ENCODE measurements at regions of chr11 and their contacts with region 1.

Region 1: GRCh38 chr11:46238967-46239800 is 38.3 kb upstream of the CREB3L1 start:
- DNase-seq: peak; percentile 88 to 95 (median 89)
- ATAC-seq: peak; percentile 77 to 87 (median 84)
- H3K4me3 ChIP-seq: peak overlapping the region in 11 of 12 donors; percentile 32 to 67 (median 59)
- H3K27ac ChIP-seq: peak overlapping the region; percentile 84 to 96 (median 92)
- H3K4me1 ChIP-seq: peaks cover 3 to 50% (median 26%) of the 10 kb centered on the region in 12 donors
- H3K27me3 ChIP-seq: no peaks in the 10 kb centered on the region
- CTCF ChIP-seq: peak; percentile 98 to 100 (median 99)
- POLR2A ChIP-seq: peak in 1 of 2 donors; percentile 40

Region 2: GRCh38 chr11:46121724-46122477 is 117.3 kb before region 1 on chr11:
- intact Hi-C with region 1: loop called in 6 of 10 experiments (anchors 2 to 10 kb)
- DNase-seq: peak; percentile 80 to 87 (median 83)
- ATAC-seq: peak in 3 of 4 donors; percentile 4 to 51 (median 42)
- H3K4me3 ChIP-seq: peak overlapping the region; percentile 50 to 92 (median 74)
- H3K27ac ChIP-seq: peak overlapping the region; percentile 43 to 98 (median 92)
- H3K4me1 ChIP-seq: peaks cover 0 to 35% (median 24%) of the 10 kb centered on the region in 12 donors
- H3K27me3 ChIP-seq: no peaks in the 10 kb centered on the region
- CTCF ChIP-seq: no peak
- POLR2A ChIP-seq: no peak

Region 3: DNA sequence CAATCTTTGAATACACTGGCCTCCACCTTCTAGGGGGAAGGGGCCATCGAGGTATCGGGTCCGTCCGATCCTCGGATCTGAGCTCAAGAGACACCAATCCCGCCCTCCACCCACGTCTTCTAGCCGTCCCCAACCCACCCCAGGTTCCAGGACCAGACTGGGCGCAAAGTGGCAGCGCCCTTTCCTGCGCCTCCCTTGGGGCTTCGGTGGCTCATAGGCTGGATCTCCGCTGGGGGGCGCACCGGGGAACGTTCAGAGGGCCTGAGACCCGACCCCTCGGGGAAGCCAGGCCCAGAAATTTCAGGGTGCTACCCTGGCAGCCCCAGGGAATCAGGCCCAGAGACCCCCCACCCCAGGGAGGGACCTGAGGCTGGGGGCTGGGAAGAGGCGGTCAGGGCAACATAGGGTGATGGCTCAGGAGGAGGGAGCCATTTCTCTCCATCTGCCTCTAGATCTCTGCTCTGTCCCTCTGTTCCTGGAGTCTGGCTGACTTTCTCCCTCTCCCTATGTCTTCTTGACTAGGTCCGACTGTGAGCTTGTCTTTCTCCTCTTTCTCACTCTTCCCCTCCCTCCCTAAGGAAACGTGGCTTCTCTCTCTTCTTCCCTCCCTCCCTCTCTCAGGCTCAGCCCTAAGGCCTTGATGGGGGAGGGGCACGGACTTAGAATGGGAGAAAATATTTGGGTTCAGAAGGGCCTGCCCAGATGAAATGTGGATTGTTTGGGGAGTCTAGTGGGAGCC is 39.4 kb after region 1 on chr11:
- intact Hi-C with region 1: loop called in 6 of 10 experiments (anchors 2 to 5 kb)
- DNase-seq: peak in 4 of 5 donors; percentile 56 to 73 (median 61)
- ATAC-seq: peak in 3 of 4 donors; percentile 27 to 50 (median 43)
- H3K4me3 ChIP-seq: peak overlapping the region; percentile 48 to 87 (median 72)
- H3K27ac ChIP-seq: peak overlapping the region; percentile 60 to 89 (median 80)
- H3K4me1 ChIP-seq: peaks cover 7 to 84% (median 58%) of the 10 kb centered on the region in 12 donors
- H3K27me3 ChIP-seq: peaks cover 0 to 24% (median 0%) of the 10 kb centered on the region in 9 donors
- CTCF ChIP-seq: peak; percentile 32 to 75 (median 56)
- POLR2A ChIP-seq: no peak

Region 4: DNA sequence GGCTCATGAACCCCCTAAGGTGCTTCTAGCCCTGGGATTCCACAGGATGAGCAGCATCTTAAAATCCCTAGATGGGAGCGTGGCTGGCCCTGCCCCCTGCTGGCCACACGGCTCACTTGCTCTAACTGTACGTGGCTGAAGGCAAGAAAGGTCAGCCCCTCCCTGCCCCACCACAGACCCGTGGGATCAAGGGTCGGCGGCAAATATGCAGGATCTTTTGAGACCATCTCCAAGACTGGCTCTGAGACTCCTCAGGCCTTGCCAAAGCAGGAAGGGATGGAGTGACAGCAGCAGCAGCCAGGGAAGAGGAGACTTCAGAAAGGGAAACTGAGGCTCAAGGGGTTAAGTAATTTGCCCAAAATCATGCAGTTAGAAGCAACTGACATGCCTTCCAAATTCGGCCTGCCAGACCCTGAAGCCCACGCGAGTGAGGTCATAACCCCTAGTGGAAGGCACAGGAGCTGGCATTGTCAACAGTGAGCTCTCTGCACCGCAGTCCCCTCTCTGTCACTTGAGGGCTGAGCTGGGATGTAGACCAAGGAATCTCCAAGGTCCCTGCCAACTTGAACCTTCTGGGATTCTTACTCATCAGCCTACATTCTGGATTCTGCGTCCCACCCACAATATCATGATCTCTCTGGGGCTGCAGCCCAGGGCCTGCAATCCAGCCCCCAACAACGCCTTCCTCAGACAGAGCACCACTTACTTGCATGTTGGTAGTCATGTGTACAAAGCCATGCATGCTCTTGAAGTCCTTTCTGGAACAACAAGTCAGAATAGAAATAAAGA is 69.6 kb after region 1 on chr11:
- intact Hi-C with region 1: loop called (anchors 1 to 5 kb)
- DNase-seq: peak; percentile 71 to 85 (median 79)
- ATAC-seq: peak; percentile 61 to 89 (median 82)
- H3K4me3 ChIP-seq: no peak overlapping the region
- H3K27ac ChIP-seq: no peak overlapping the region
- H3K4me1 ChIP-seq: peaks cover 0 to 9% (median 0%) of the 10 kb centered on the region in 12 donors
- H3K27me3 ChIP-seq: no peaks in the 10 kb centered on the region
- CTCF ChIP-seq: peak; percentile 81 to 95 (median 88)
- POLR2A ChIP-seq: no peak

Region 5: DNA sequence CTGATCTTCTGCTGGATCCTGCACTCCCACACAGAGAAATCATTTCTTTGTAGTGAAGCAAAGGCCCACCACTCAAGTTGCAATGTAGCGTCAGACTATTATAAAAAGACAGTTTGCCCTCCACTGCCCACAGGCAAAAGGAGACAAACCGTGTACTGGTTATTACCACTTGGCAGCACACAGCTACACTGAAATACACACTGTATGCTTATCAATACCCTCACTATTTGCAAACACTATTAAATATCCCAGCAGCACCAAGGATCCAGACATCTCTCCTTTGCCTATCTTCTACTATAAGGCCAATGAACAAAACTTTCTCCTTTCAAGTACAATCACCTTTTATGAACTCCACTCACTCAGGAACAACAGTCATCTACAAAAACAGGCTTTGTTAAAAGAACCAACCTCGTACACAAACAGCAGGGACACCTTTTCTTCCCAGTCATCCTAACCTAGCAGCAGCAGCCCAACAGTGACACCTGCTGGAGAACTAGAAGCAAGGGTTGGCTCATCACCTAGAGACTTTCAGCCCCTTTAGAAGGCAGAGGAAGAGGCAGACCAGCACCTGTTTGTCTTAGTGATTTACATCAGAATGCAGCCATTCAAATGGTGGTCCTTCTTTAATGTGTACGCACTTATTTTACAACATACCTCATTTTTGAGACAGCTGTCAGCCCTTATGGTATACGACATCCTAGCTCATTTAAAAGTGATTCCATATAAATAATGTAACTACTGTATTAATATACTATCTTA is 298.5 kb after region 1 on chr11:
- intact Hi-C with region 1: loop called in 2 of 10 experiments (anchors 10 kb)
- DNase-seq: peak in 4 of 5 donors; percentile 53 to 63 (median 60)
- ATAC-seq: peak; percentile 46 to 78 (median 74)
- H3K4me3 ChIP-seq: no peak overlapping the region
- H3K27ac ChIP-seq: no peak overlapping the region
- H3K4me1 ChIP-seq: peaks cover 0 to 26% (median 8%) of the 10 kb centered on the region in 12 donors
- H3K27me3 ChIP-seq: no peaks in the 10 kb centered on the region
- CTCF ChIP-seq: peak; percentile 80 to 94 (median 90)
- POLR2A ChIP-seq: no peak

Region 6: DNA sequence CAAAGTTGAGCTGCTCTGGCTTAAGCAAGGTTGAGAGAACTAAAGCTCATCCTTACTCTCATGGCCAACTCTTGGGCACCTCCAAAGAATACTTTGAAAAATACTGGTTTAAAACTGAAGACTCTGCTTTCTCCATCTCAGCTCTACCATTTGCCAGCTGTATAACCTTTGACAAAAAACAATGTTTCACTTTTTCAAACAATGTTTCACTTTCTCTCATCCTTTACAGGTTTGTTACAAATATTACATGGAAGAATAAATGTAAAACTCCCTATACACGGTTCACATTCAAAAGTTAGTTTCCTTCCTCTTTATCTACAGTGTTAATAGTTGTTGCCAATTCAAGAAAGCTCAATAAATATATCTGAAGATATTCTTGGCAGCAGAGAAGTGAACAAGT is 335.5 kb after region 1 on chr11:
- intact Hi-C with region 1: no loop called
- DNase-seq: no peak
- ATAC-seq: no peak
- H3K4me3 ChIP-seq: no peak overlapping the region
- H3K27ac ChIP-seq: no peak overlapping the region
- H3K4me1 ChIP-seq: peaks cover 0 to 30% (median 16%) of the 10 kb centered on the region in 12 donors
- H3K27me3 ChIP-seq: no peaks in the 10 kb centered on the region
- CTCF ChIP-seq: no peak
- POLR2A ChIP-seq: no peak

Measured in heart left ventricle (tissue), 16 donors.